ENCODE measurements at regions of chr14 and their contacts with region 1.

Region 1: DNA sequence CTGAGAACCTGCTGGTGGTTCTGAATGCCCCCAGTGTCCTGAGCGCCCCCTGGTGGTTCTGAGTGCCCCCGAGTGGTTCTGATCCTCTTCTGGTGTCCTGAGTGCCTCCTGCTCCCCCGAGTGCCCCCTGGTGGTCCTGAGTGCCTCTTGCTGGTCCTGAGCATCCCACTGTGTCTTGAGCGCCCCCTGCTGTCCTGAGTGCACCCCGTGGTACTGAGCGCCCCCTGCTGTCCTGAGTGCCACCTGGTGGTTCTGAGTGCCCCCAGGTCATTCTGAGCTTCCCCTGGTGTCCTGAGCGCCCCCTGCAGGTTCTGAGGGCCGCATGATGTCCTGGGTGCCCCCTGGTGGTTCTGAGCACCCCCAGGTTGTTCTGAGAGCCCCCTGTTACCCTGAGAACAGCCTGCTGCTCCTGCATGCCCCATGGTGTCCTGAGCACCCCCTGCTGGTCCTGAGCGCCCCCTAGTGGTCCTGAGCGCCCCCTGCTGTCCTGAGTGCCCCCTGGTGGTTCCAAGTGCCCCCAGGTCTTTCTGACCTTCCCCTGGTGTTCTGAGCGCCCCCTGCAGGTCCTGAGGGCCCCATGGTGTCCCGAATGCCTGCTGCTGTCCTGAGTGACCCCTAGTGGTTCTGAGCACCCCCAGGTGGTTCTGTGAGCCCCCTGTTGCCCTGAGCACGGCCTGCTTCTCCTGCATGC is 1165.4 kb downstream of the TMEM121 start:
- DNase-seq: peak in 8 of 9 donors; percentile 18 to 72 (median 50)
- ATAC-seq: peak; percentile 65
- H3K4me3 ChIP-seq: no peak overlapping the region
- H3K4me3 Mint-ChIP-seq: no peak overlapping the region
- H3K27ac ChIP-seq: no peak overlapping the region
- H3K27ac Mint-ChIP-seq: peak overlapping the region in 5 of 9 donors; percentile 8 to 69 (median 14)
- H3K4me1 ChIP-seq: peaks cover 0 to 4% of the 10 kb centered on the region in 2 donors
- H3K4me1 Mint-ChIP-seq: peaks cover 10 to 22% (median 14%) of the 10 kb centered on the region in 7 donors
- H3K27me3 ChIP-seq: no peaks in the 10 kb centered on the region
- H3K27me3 Mint-ChIP-seq: peaks cover 0 to 31% (median 0%) of the 10 kb centered on the region in 5 donors

Region 2: DNA sequence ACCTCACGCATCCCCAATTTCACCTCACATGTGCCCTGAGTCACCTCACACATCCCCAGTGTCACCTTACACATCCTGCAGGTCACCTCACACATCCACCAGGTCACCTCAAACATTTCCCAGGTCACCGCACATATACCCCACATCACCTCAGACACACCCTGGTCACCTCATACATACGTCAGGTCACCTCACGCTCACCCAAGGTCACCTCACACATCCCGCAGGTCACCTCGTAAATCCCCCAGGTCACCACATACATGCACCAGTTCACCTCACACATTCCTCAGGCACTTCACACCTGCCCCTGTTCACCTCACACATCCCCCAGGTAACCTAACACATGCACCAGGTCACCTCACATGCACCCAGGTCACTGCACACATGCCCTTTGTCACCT is 301.3 kb before region 1 on chr14:
- CTCF ChIA-PET with region 1: no interaction called
- POLR2A ChIA-PET with region 1: no interaction called
- intact Hi-C with region 1: no loop called
- DNase-seq: no peak
- ATAC-seq: no peak
- H3K4me3 ChIP-seq: no peak overlapping the region
- H3K4me3 Mint-ChIP-seq: no peak overlapping the region
- H3K27ac ChIP-seq: no peak overlapping the region
- H3K27ac Mint-ChIP-seq: no peak overlapping the region
- H3K4me1 ChIP-seq: peaks cover 0 to 6% of the 10 kb centered on the region in 2 donors
- H3K4me1 Mint-ChIP-seq: peaks cover 5 to 67% (median 9%) of the 10 kb centered on the region in 7 donors
- H3K27me3 ChIP-seq: no peaks in the 10 kb centered on the region
- H3K27me3 Mint-ChIP-seq: peaks cover 0 to 44% (median 24%) of the 10 kb centered on the region in 5 donors

Region 3: GRCh38 chr14:106665814-106666213 is 25.9 kb before region 1 on chr14:
- CTCF ChIA-PET with region 1: interaction called, 3 read pairs
- POLR2A ChIA-PET with region 1: no interaction called
- intact Hi-C with region 1: loop called in 1 of 2 experiments (anchors 1 kb)
- DNase-seq: peak in 1 of 9 donors; percentile 31
- ATAC-seq: no peak
- H3K4me3 ChIP-seq: no peak overlapping the region
- H3K4me3 Mint-ChIP-seq: peak overlapping the region in 1 of 10 donors; percentile 2
- H3K27ac ChIP-seq: no peak overlapping the region
- H3K27ac Mint-ChIP-seq: no peak overlapping the region
- H3K4me1 ChIP-seq: peaks cover 0 to 13% of the 10 kb centered on the region in 2 donors
- H3K4me1 Mint-ChIP-seq: peaks cover 5 to 33% (median 17%) of the 10 kb centered on the region in 7 donors
- H3K27me3 ChIP-seq: no peaks in the 10 kb centered on the region
- H3K27me3 Mint-ChIP-seq: peaks cover 5 to 56% (median 10%) of the 10 kb centered on the region in 5 donors

Region 4: GRCh38 chr14:106738075-106738474 is 46.3 kb after region 1 on chr14:
- CTCF ChIA-PET with region 1: interaction called, 6 read pairs
- POLR2A ChIA-PET with region 1: no interaction called
- intact Hi-C with region 1: loop called in 1 of 2 experiments (anchors 1 kb)
- DNase-seq: peak in 2 of 9 donors; percentile 35 to 40
- ATAC-seq: peak; percentile 46
- H3K4me3 ChIP-seq: no peak overlapping the region
- H3K4me3 Mint-ChIP-seq: peak overlapping the region in 1 of 10 donors; percentile 88
- H3K27ac ChIP-seq: no peak overlapping the region
- H3K27ac Mint-ChIP-seq: peak overlapping the region in 1 of 9 donors; percentile 99
- H3K4me1 ChIP-seq: peaks cover 0 to 2% of the 10 kb centered on the region in 2 donors
- H3K4me1 Mint-ChIP-seq: peaks cover 0 to 14% (median 0%) of the 10 kb centered on the region in 7 donors
- H3K27me3 ChIP-seq: no peaks in the 10 kb centered on the region
- H3K27me3 Mint-ChIP-seq: no peaks in the 10 kb centered on the region

Region 5: DNA sequence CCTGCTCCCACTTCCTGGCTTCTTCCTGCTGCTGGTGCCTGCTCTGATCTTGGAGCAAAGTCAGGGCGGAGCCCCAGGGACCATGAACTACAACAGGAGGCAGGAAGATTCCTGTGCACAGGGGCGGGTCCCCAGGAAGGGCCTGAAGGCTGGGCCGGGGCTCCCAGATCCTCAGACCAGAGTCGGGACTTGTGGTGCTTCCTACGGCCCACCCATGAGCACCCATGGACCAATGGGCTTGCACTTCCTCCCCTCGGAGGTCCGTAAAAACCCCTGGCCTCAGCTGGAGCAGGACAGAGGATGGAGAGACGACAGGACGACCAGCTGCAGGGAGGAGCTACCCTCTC is 121.7 kb after region 1 on chr14:
- CTCF ChIA-PET with region 1: no interaction called
- POLR2A ChIA-PET with region 1: no interaction called
- intact Hi-C with region 1: no loop called
- DNase-seq: no peak
- ATAC-seq: no peak
- H3K4me3 ChIP-seq: no peak overlapping the region
- H3K4me3 Mint-ChIP-seq: no peak overlapping the region
- H3K27ac ChIP-seq: no peak overlapping the region
- H3K27ac Mint-ChIP-seq: no peak overlapping the region
- H3K4me1 ChIP-seq: peaks cover 0 to 9% of the 10 kb centered on the region in 2 donors
- H3K4me1 Mint-ChIP-seq: peaks cover 6 to 14% (median 10%) of the 10 kb centered on the region in 7 donors
- H3K27me3 ChIP-seq: no peaks in the 10 kb centered on the region
- H3K27me3 Mint-ChIP-seq: peaks cover 0 to 28% (median 9%) of the 10 kb centered on the region in 5 donors

Measured in naive thymus-derived CD4-positive, alpha-beta T cell (primary cell).